ENCODE measurements at regions of chr19 and their contacts with region 1.

Region 1: DNA sequence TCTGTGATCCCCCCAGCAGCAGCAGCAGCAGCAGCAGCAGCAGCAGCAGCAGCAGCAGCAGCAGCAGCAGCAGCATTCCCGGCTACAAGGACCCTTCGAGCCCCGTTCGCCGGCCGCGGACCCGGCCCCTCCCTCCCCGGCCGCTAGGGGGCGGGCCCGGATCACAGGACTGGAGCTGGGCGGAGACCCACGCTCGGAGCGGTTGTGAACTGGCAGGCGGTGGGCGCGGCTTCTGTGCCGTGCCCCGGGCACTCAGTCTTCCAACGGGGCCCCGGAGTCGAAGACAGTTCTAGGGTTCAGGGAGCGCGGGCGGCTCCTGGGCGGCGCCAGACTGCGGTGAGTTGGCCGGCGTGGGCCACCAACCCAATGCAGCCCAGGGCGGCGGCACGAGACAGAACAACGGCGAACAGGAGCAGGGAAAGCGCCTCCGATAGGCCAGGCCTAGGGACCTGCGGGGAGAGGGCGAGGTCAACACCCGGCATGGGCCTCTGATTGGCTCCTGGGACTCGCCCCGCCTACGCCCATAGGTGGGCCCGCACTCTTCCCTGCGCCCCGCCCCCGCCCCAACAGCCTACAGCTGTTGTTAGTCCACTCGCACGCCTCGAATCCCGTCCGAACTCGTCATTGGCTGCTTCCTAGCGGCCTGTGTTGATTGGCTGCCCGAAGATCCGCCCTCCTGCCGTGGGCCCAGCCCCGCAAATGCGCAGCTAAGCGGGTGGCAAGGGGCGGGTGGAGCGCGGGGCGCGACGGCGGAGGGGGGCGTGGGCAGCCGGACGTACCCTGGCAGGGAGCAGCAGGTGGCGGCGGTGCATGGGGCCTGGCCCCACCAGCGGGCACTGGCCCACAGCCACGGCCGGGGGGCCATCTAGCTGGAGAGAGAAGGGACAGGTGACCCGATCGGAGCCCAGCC is 1.4 kb upstream of the SIX5 start:
- DNase-seq: peak; percentile 85
- H3K4me3 Mint-ChIP-seq: peak overlapping the region; percentile 88
- H3K27ac Mint-ChIP-seq: no peak overlapping the region
- H3K4me1 Mint-ChIP-seq: peaks cover 9% of the 10 kb centered on the region
- H3K27me3 Mint-ChIP-seq: peaks cover 20% of the 10 kb centered on the region

Region 2: GRCh38 chr19:45717166-45717982 is 53.1 kb before region 1 on chr19:
- intact Hi-C with region 1: loop called (anchors 1 kb)
- DNase-seq: peak; percentile 99
- H3K4me3 Mint-ChIP-seq: peak overlapping the region; percentile 96
- H3K27ac Mint-ChIP-seq: peak overlapping the region; percentile 96
- H3K4me1 Mint-ChIP-seq: peaks cover 40% of the 10 kb centered on the region
- H3K27me3 Mint-ChIP-seq: no peaks in the 10 kb centered on the region

Region 3: DNA sequence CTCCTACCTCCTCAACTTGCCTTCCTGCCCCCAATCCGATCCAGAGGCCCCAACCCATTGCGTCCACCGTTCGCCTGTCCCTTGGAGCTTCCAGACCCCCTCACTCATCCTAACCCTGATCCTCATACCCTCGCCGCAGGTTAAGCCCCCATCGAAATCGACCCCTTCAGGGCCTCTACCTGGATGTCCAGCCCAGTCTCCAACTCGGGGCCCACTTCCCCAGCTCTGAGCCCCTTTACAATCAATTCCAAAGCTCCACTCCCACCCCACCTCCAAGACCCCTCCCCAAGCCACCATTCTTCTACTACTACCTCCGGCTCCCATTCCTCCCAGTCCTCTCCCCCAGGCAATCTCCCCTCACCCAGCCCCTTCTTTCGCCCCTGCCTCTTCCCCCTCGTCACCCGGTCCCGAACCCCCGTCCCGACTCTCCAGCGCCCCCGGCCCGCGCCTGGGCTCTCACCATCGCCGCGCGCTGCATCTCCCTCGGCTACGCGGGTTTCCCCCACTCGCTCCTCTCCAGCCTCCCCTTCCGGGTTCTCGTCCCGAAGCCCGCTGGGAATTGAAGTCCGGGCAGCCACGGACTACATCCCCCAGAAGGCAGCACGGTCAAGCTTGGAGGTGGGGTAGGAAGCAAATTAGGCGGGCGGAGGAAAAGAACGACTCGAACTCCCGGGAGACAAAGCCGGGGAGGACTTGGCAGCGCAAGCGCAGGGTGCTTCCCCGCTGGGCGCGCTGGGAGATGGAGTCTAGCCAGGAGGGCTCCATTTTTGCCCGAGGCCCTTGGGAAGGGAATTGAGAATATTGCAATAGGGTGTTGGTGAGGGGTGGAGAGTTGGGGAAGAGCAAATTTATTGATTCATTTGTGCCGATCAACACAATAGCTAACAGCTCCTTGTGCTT is 39.8 kb before region 1 on chr19 and contains the start of gene FBXO46:
- intact Hi-C with region 1: loop called (anchors 1 kb)
- DNase-seq: peak; percentile 95
- H3K4me3 Mint-ChIP-seq: peak within 1 kb of the TSS; percentile 99
- H3K27ac Mint-ChIP-seq: peak within 1 kb of the TSS; percentile 85
- H3K4me1 Mint-ChIP-seq: peaks cover 26% of the 10 kb centered on the region
- H3K27me3 Mint-ChIP-seq: peaks cover 2% of the 10 kb centered on the region
- total RNA-seq, gene FBXO46: 35.1 and 35.4 TPM in 2 replicates

Region 4: DNA sequence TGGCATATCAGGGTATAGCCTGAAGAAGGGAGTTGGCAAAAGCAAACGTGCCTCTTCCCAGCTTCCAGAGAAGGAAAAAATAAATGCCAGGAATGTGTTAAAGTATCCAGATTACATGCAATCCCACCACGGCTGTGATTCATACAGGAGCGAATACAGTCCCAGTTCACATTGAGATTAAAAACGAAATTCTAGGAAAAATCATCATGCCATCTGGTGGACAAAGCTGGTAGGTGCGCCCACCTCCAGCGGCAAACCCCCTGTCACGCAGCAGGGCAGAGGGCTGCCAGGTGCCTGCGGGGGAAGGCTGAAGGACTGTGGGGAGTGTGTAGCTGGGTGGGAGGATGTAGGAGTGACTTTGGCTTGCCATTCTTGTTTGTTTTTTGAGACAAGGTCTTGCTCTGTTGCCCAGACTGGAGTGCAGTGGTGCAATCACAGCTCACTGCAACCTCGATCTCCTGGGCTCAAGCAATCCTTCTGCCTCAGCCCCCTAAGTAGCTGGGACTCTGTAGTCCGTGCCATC is 28.6 kb after region 1 on chr19:
- intact Hi-C with region 1: loop called (anchors 1 kb)
- DNase-seq: peak; percentile 33
- H3K4me3 Mint-ChIP-seq: no peak overlapping the region
- H3K27ac Mint-ChIP-seq: no peak overlapping the region
- H3K4me1 Mint-ChIP-seq: peaks cover 7% of the 10 kb centered on the region
- H3K27me3 Mint-ChIP-seq: peaks cover 49% of the 10 kb centered on the region

Region 5: GRCh38 chr19:45817010-45817724 is 46.7 kb after region 1 on chr19:
- intact Hi-C with region 1: loop called (anchors 1 kb)
- DNase-seq: peak; percentile 89
- H3K4me3 Mint-ChIP-seq: no peak overlapping the region
- H3K27ac Mint-ChIP-seq: no peak overlapping the region
- H3K4me1 Mint-ChIP-seq: no peaks in the 10 kb centered on the region
- H3K27me3 Mint-ChIP-seq: no peaks in the 10 kb centered on the region

Region 6: DNA sequence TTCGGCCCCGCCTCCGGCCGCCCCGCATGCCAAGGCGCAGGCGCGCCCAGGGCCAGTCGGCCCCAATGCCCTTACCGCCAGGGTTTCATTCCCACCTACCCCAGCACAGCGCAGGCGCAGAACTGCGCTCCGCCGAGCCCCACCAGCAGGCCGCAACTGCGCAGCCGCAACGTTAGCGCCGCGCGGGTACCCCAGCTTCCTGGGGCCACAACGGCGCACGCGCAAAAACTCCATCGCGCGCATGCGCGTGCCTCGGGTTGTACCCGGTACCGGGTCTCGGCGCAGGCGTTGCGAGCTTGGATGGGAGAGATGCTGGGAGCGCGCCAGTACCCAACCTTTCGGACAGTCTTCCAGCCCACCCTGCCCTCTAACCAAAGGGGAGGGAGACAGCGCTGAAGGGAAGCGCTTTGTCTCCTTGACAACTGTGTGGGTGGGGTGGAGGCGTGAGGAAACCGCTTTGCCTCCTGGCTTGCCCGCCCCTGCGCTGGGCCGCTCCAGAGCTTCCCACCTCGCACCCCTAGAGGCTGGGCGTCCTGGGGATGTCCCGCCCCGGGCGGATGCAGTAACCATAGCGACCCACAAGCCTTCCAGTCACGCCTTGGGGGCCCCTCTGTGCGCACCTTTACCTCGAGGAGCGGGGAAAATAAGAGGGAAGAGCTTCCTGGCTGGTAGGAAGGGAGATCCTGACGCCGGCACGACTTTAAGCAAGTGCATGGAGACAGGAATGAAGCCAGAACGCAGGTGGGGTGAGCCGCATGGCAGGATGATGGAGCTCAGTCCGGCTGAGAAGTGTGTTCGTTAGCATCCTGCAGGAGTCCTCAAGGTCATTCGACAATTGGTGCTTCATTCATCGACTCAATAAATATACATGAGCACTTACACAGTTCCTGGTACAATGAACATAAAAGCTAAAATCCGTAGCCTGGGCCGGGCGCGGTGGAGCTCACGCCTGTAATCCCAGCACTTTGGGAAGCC is 132.5 kb after region 1 on chr19:
- intact Hi-C with region 1: loop called (anchors 1 kb)
- DNase-seq: peak; percentile 100
- H3K4me3 Mint-ChIP-seq: peak overlapping the region; percentile 88
- H3K27ac Mint-ChIP-seq: peak overlapping the region; percentile 80
- H3K4me1 Mint-ChIP-seq: peaks cover 16% of the 10 kb centered on the region
- H3K27me3 Mint-ChIP-seq: peaks cover 1% of the 10 kb centered on the region